Activated naive CD8-positive, alpha-beta T cell treated with anti-CD3 and anti-CD28 coated beads, Interleukin-2, amount 10 ng/mL, durations not matched to agents 7 days and 5 days (primary cell): ENCODE measurements at regions of chrX and their contacts with region 1.

Region 1: GRCh38 chrX:38327007-38327774 is at the start of gene RPGR:
- DNase-seq: peak; percentile 89
- ATAC-seq: peak; percentile 97
- H3K4me3 Mint-ChIP-seq: peak within 1 kb of the TSS; percentile 91
- H3K27ac Mint-ChIP-seq: peak within 1 kb of the TSS; percentile 92
- H3K4me1 Mint-ChIP-seq: peaks cover 17% of the 10 kb centered on the region
- H3K27me3 Mint-ChIP-seq: no peaks in the 10 kb centered on the region
- total RNA-seq, gene RPGR: 7.8 to 7.9 TPM

Region 2: GRCh38 chrX:38220024-38220414 is 107.2 kb before region 1 on chrX:
- POLR2A ChIA-PET with region 1: interaction called, 13 read pairs
- DNase-seq: peak; percentile 44
- ATAC-seq: peak; percentile 71
- H3K4me3 Mint-ChIP-seq: peak overlapping the region; percentile 72
- H3K27ac Mint-ChIP-seq: no peak overlapping the region
- H3K4me1 Mint-ChIP-seq: peaks cover 4% of the 10 kb centered on the region
- H3K27me3 Mint-ChIP-seq: peaks cover 41% of the 10 kb centered on the region